Activated T-helper 1 cell treated with anti-CD3 and anti-CD28 coated beads, Interleukin-12 subunit alpha, Interleukin-12 subunit beta, Interleukin-2, Interleukin-4 antibody, amounts not matched to agents 30 ng/mL and 10 ng/mL and 1 ng/mL, durations not matched to agents 14 hours and 24 hours and 36 hours (primary cell): ENCODE measurements at regions of chr5 and their contacts with region 1.

Region 1: DNA sequence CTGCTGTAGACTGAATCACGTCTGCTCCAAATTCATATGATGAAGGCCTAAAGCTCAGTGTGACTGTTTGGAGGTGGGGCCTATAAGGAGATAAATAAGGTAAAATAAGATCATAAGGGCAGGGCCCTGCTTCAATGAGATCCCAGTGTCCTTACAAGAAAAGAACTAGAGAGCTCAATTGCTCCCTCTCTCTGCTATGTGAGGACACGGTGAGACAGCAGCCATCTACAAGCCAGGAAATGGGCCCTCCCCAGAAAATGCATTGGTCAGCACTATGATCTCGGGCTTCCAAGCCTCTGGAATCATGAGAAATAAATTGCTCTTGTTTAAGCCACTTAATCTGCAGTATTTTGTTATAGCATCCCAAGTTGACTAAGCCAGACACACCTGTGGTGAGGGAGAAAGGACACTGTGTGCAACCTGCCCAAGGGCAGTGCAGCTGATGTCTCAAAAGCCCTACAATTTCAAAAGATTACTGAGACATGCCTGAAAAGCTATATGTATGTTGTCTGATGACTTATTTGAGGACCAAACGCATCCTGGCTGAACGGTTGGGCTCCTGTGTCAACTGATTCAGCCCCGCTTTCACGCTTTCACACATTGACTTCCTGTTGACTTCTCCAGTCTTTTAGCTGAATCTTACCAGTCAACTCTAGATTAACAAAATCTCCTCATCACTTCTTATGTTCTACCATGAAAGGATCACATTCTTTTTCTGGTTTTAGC is 13.2 kb downstream of the GZMK start:
- DNase-seq: peak; percentile 72
- H3K4me3 Mint-ChIP-seq: peak overlapping the region; percentile 50
- H3K27ac Mint-ChIP-seq: peak overlapping the region; percentile 93
- H3K4me1 Mint-ChIP-seq: peaks cover 61% of the 10 kb centered on the region
- H3K27me3 Mint-ChIP-seq: no peaks in the 10 kb centered on the region

Region 2: GRCh38 chr5:54799645-54800044 is 237.6 kb before region 1 on chr5:
- intact Hi-C with region 1: loop called (anchors 10 kb)
- DNase-seq: no peak
- H3K4me3 Mint-ChIP-seq: no peak overlapping the region
- H3K27ac Mint-ChIP-seq: no peak overlapping the region
- H3K4me1 Mint-ChIP-seq: peaks cover 54% of the 10 kb centered on the region
- H3K27me3 Mint-ChIP-seq: no peaks in the 10 kb centered on the region

Region 3: GRCh38 chr5:54927097-54927746 is 110.0 kb before region 1 on chr5:
- intact Hi-C with region 1: loop called (anchors 1 kb)
- DNase-seq: no peak
- H3K4me3 Mint-ChIP-seq: no peak overlapping the region
- H3K27ac Mint-ChIP-seq: peak overlapping the region; percentile 3
- H3K4me1 Mint-ChIP-seq: peaks cover 8% of the 10 kb centered on the region
- H3K27me3 Mint-ChIP-seq: peaks cover 14% of the 10 kb centered on the region

Region 4: GRCh38 chr5:55004729-55005128 is 32.5 kb before region 1 on chr5:
- intact Hi-C with region 1: loop called (anchors 2 kb)
- DNase-seq: no peak
- H3K4me3 Mint-ChIP-seq: no peak overlapping the region
- H3K27ac Mint-ChIP-seq: no peak overlapping the region
- H3K4me1 Mint-ChIP-seq: peaks cover 48% of the 10 kb centered on the region
- H3K27me3 Mint-ChIP-seq: peaks cover 8% of the 10 kb centered on the region

Region 5: DNA sequence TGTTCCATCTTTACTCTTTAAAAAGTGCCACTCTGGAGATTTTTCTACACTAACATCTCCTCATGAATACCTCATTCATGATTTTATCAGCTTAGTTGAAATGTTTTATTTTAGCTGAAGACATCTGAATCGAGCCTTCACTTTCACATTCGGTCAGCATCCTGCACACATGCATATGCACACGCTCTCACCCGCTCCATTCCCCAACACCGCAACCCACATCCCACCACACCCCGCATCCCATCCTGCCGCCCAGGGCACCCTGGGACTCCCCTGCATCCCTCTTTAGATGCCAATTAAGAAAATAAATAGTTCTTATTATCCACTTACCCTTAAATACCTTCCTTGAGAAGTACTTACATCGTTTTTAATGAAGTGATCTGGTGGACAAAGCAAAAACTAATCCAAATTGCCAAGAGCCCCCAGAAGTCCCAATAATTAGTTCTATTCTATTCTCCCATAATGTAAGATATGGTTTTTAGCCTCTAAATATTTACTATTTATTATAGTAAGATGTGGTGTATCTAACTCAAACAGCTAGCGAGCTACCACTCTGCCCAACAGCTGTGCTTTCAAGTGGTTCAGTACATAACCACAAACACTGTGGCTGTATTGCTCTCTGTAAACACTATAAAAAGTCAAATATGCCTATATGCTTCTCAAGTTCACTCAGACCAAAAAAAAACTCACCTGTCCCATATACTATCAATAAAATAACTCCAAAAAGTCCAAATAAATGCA is 25.0 kb after region 1 on chr5:
- intact Hi-C with region 1: loop called (anchors 1 kb)
- DNase-seq: peak; percentile 79
- H3K4me3 Mint-ChIP-seq: peak overlapping the region; percentile 79
- H3K27ac Mint-ChIP-seq: peak overlapping the region; percentile 98
- H3K4me1 Mint-ChIP-seq: peaks cover 83% of the 10 kb centered on the region
- H3K27me3 Mint-ChIP-seq: peaks cover 1% of the 10 kb centered on the region

Region 6: DNA sequence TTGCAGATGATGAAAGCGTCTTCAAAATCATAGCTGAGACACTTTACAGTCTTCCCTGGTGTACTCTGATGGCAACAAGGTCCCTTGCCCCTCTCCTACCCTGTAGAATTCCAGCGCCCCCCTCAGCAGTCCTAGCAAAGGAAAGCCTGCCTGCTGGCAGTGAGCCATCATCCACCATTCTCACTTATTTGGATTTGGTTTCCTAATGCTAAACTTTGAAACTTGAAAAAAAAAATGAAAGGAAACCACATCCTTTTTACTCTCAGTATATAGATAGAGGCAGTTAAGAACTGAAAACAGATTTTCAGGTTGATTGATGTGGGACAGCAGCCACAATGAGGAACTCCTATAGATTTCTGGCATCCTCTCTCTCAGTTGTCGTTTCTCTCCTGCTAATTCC is 65.1 kb after region 1 on chr5 and contains the start of gene GZMA:
- intact Hi-C with region 1: loop called (anchors 1 kb)
- DNase-seq: peak; percentile 36
- H3K4me3 Mint-ChIP-seq: peak within 1 kb of the TSS; percentile 85
- H3K27ac Mint-ChIP-seq: peak within 1 kb of the TSS; percentile 93
- H3K4me1 Mint-ChIP-seq: peaks cover 87% of the 10 kb centered on the region
- H3K27me3 Mint-ChIP-seq: no peaks in the 10 kb centered on the region
- total RNA-seq, gene GZMA: 88.1 and 93.7 TPM in 2 replicates

Region 7: DNA sequence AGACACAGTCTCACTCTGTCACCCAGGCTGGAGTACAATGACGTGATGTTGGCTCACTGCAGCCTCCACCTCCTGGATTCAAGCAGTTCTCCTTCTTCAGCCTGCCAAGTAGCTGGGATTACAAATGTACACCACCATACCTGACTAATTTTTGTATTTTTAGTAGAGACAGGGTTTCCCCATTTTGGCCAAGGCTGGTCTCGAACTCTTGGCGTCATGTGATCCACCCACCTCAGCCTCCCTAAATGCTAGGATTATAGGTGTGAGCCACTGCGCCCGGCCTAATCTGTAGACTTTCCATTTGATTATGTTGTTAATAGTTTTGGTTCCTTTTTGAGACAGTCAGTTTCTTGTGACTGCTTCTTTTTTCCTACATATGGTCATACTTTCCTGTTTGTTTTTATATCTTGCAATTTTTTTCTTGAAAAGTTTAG is 301.6 kb after region 1 on chr5:
- intact Hi-C with region 1: loop called (anchors 2 kb)
- DNase-seq: no peak
- H3K4me3 Mint-ChIP-seq: peak overlapping the region; percentile 37
- H3K27ac Mint-ChIP-seq: peak overlapping the region; percentile 87
- H3K4me1 Mint-ChIP-seq: peaks cover 22% of the 10 kb centered on the region
- H3K27me3 Mint-ChIP-seq: no peaks in the 10 kb centered on the region